ENCODE measurements at regions of chr3 and their contacts with region 1.

Region 1: DNA sequence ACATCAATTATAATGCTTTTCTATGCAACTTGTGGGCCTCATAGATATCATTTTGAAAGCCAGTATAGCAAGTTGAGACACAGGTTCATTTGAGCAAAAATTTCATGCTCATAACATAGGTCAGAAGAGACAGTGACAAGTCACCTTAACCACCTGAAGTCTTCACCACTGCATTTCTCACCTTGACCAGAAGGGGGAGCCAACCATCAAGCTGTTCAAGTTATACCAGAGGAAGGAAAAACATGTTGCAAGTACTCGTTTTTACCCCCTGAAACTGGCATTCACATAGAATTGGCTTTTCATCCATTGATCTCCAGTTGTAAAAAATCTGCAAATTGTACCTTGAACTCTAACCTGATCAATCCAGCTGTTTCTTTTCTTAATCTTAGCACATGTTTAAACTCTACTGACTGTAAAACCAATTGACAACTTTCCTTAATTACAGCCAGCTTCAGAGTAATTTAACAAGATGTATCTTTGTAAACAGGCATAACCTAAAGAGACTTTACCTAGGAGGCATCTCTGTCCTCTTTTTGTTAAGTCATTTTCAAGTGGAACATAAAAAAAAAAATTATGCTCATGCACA is 1.4 kb downstream of the LMOD3 start:
- DNase-seq: no peak
- ATAC-seq: no peak

Region 2: GRCh38 chr3:68878322-68878721 is 242.7 kb before region 1 on chr3:
- intact Hi-C with region 1: no loop called
- DNase-seq: no peak
- ATAC-seq: no peak

Region 3: GRCh38 chr3:69080233-69080920 is 40.6 kb before region 1 on chr3 and contains the start of gene UBA3:
- intact Hi-C with region 1: loop called (anchors 2 kb)
- DNase-seq: peak; percentile 96
- ATAC-seq: peak; percentile 88
- total RNA-seq, gene UBA3: 89.1 TPM

Region 4: DNA sequence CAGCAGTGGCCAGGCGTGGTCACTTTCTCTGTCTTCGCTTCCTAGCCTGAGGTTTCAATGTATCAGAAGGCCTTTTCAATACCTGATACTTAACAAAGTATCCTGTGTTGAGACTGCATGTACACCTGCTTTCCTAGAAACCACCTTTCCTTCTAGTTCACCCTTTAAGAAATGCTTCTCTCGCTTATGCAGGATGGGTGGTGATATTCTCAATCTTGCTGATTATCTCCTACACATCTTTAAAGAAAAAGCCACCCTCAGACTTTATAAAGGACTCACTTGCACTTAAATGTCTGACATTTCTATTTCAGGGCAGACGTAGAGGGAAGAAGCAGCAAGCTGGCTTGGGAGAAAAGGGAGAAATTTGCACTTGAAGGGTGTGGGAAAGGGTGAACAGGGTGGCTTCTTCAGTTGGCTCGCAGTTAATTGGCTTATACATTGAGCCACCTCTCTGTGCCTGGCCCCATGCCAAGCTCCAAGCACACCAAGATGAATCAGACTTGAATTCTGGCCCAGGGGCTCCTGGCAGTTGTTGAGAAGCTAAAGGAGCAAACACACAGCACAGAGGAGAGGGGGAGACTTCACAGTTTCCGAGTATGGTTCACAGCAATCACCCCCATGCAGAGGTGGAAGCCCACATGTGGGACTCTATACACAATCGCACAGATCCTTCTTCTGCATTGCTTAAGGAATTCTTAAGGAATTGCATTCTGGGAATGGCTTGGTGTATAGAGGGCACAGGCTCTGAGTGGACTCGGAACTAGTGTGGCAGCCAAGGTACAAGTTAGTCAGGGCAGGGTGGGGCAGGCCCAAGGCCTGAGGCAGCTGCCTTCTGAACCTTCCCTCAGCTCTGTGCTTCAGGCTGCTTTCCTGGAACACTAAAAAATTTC is 34.9 kb before region 1 on chr3:
- intact Hi-C with region 1: loop called (anchors 1 kb)
- DNase-seq: peak; percentile 90
- ATAC-seq: peak; percentile 75

Region 5: DNA sequence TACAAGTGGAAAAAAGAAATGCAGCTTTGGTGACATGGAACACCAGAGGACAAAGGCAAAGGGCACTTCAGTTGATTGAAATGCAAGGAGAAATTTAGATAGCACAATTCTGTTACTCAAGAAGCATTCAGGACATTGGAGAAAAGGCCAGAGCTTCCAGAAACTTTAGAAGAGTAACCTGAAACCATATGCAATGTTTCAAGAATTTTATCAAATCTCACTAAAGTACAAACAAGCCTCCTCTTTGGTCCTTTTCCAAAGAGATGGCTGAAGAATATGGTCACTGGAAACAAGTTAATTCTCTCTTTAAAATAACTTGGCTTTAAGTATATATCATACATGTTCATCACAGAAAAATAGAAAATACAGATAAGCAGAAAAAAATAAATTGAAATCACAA is 16.0 kb after region 1 on chr3:
- intact Hi-C with region 1: no loop called
- DNase-seq: no peak
- ATAC-seq: no peak

Region 6: DNA sequence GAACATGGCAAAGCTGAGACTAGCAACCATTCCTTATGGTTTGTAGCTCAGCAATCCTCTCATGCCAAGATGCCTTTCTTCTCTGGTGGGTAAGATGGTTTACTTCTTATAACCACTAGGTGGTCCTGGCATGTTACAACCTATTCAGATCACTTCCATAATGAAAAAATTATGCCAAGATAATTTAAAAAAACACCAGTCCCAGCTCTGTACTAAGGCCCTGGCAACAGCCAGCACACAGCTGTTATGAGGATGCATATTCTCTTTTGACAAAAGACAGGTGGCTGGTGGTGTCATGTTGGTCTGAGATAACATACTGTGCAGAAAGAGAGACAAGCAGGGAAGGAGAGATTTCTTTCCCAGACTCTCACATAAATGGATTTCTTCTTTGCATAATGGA is 330.6 kb after region 1 on chr3:
- intact Hi-C with region 1: no loop called
- DNase-seq: no peak
- ATAC-seq: peak; percentile 47

Measured in Right ventricle myocardium inferior (tissue), 1 donor.